Motor neuron (in vitro differentiated cells): ENCODE measurements at regions of chr20 and their contacts with region 1.

Region 1: DNA sequence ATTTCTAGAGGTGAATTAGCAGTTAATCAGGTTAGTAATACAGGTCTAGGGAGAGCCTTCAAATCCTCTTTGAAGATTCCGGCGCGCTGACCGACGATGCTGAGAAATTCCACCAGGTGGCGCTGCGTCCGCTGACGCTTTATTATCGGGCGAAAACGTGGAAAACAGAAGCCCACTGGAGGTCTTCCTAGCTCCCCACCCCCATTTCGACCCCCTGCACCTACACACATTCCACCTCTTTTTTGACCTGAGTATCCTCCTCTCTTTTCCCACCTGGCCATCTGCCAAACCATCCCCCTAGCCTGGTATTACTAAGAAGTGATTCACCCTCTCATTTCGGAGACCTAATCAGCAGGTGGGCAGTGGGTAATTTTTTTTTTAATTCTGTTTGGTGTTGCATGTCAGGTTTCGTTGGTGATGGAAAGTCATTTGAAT is 65.4 kb upstream of the RIN2 start:
- ATAC-seq: peak in 1 of 8 experiments; percentile 25
- H3K4me3 ChIP-seq: no peak overlapping the region
- H3K27ac ChIP-seq: no peak overlapping the region
- H3K4me1 ChIP-seq: no peaks in the 10 kb centered on the region

Region 2: DNA sequence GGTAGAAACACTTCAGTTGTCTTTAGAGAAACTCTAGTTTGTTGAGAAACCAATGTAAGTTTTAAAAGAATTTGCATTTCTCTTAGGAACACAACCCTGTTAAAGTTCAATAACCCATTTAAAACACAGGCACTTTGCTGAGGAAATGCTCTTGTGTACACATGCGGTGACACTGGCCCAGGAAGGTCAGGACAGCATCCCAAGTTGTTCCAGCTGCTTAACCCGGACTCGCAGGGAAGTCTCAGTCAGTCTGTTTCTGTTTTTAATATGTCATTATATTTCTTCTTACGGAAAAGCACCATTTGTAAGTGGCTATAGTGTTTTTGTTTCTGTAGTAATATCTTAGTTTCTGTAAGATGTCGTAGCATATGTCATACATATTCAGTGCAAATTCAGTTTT is 102.2 kb after region 1 on chr20:
- in situ Hi-C with region 1: loop called in 1 of 9 experiments (anchors 10 kb)
- ATAC-seq: no peak
- H3K4me3 ChIP-seq: no peak overlapping the region
- H3K27ac ChIP-seq: no peak overlapping the region
- H3K4me1 ChIP-seq: no peaks in the 10 kb centered on the region

Region 3: DNA sequence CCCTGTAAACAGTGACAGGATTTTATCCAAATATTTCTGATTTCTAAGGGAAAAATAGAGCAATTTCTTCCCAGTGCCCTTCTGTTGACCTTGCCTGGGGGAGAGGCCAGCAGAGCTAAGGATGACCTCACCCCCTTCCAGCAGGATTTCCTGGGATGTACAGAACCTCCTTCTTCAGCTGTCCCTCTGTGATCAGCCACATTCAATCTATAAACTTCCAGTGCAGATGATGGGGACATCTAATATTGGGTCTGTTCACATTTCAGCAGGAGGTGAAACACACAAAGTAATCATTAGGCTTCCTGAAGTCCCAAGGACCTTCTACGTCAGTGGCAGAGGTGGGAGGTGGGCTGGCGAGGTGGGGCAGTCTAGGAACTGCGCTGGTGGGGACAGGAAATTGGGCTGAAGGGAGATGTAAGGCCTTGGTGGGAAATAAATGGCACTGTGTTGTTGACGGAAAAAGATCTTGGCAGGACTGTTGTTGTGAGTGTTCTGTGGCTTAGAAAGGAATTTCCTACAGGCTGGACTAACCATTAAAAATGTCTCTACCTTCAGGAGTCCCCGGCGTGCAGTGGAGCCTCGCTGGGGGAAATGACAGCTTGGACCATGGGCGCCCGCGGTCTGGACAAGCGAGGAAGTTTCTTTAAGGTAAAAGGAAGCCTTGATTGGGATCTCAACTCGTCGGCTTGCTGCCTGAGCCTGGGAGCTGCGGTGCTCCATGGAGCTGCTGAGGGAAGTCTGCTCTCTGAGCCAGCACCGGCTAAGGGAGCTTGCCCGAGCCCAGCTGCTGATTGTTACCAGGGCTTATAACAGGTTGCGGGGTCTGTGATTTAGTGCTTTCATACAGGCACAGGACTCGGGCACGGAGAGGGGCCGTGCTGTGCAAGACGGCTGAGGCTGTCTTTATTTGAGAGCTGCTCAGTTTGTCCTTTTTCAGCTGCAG is 196.6 kb after region 1 on chr20:
- in situ Hi-C with region 1: loop called in 1 of 9 experiments (anchors 25 kb)
- ATAC-seq: peak; percentile 23 to 95 (median 85)
- H3K4me3 ChIP-seq: no peak overlapping the region
- H3K27ac ChIP-seq: peak overlapping the region; percentile 47 to 63
- H3K4me1 ChIP-seq: peaks cover 21% of the 10 kb centered on the region in 2 donors

Region 4: DNA sequence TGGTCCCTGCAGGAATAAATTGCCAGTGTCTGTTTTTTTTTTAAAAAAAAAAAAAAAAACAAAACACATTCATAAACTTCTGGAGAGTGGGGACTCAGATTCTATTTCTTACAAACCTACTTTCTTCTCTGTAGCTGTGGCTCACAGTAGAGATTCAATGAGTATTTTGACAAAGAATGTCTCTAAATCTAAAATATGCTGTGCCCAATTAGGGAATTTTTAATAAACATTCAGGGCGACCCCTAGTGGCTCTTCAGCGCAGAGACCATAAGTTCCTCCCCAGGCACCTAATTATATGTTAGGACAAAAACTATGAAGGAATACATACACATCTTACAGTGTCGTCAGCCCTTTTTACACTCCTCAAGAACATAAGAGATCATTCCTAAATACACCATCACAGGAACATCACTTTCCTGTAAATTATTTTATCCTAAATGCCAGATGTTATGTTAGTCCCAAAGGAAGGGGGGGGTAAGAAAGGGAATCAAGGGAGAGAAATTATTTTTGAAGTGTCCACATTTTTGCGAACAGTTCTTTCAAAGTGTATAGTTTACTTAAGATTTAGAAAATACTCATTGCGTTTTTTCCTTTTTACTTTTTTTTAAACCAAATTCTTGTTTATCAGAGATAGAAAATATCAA is 302.6 kb after region 1 on chr20:
- in situ Hi-C with region 1: loop called in 3 of 9 experiments (anchors 10 to 25 kb)
- ATAC-seq: peak in 3 of 8 experiments; percentile 4 to 20 (median 10)
- H3K4me3 ChIP-seq: no peak overlapping the region
- H3K27ac ChIP-seq: no peak overlapping the region
- H3K4me1 ChIP-seq: peaks cover 21 to 23% of the 10 kb centered on the region in 2 donors

Region 5: DNA sequence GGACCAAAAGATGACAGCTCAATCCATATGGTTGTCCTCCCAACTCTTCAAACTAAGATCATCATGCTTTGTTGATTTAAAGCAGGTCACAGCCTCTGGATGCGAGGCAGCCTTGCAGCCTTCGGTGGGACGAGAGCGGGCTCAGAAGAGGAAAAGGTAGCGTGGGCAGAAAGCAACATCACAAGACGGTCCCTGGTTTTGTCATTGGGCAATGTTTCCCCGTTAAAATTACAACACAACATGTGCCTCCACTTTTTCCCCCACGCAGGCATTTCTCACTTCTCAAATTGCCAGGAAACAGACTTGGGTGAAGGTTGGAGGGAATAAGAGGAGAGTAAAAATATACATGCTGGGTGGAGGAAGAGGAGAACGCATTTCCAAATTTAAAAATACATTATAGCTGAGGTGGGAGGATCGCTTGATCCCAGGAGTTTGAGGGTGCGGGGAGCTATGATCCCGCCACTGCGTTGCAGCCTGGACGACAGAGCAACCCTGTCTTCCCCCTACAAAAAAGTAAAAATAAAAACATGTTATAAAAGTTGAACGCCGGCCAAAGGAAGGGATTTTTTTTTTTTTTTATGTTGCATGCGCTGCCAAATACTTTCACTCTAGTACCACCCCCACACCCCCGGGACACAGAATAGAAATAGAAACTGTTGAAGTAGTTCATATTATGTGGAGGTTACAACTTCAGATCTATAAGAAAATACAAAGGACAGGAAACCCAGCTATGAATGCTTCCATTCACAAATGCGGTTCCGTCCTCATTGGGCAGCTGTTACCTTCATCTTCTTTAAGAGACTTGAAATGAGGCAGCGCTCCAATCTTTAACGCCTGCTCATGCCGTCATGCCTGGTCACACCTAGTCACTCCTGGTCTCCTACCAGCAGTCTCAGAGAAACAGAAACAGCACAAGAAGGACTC is 310.6 kb after region 1 on chr20:
- in situ Hi-C with region 1: loop called in 3 of 9 experiments (anchors 10 to 25 kb)
- ATAC-seq: peak in 2 of 8 experiments; percentile 12 to 20
- H3K4me3 ChIP-seq: no peak overlapping the region
- H3K27ac ChIP-seq: no peak overlapping the region
- H3K4me1 ChIP-seq: peaks cover 0 to 6% of the 10 kb centered on the region in 2 donors

Region 6: DNA sequence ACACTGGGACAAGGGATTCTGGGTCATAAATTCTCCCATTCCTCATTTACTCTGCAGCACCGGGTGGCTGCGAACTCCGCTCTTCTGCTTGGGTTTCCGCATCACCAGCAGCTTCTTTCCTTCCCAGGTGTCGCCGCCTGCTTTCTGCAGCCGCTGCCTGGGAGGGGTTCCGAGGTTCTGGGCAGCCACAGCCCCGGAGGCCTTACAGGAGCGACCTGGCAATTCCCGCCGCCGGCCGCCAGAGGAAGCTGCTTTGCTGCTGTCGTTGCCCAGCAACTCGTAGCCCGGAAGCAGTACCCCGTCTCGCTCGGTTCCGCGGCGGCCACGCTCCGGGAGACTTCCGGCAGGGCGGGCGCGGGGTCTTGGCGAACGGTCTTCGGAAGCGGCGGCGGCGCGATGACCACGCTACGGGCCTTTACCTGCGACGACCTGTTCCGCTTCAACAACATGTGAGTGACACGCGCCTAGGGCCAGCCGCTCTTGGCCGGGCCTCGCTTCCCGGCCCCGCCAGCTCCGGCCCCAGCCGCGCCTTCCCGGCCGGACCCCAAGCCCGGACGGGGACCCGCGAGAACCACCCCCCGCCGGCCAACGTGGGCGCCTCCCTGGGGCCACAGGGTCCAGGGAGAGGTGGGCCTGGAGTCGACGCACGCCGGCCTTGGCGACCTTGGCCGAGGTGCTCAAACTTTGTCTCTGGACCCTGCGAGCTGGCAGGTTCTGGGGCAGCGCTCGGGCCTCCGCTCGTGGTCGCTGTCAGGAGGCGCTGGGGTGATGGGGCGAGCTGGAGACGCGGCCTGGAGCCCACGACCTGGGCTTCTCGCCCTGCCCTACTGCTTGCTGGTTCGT is 324.5 kb after region 1 on chr20 and contains the start of gene NAA20:
- in situ Hi-C with region 1: loop called in 1 of 9 experiments (anchors 25 kb)
- ATAC-seq: peak; percentile 95 to 99 (median 98)
- H3K4me3 ChIP-seq: peak within 1 kb of the TSS; percentile 58 to 99 (median 76)
- H3K27ac ChIP-seq: peak within 1 kb of the TSS; percentile 71 to 90
- H3K4me1 ChIP-seq: peaks cover 8 to 9% of the 10 kb centered on the region in 2 donors
- total RNA-seq, gene NAA20: 33.5 to 64.3 (median 44.4) TPM